ENCODE measurements at regions of chr16 and their contacts with region 1.

Region 1: DNA sequence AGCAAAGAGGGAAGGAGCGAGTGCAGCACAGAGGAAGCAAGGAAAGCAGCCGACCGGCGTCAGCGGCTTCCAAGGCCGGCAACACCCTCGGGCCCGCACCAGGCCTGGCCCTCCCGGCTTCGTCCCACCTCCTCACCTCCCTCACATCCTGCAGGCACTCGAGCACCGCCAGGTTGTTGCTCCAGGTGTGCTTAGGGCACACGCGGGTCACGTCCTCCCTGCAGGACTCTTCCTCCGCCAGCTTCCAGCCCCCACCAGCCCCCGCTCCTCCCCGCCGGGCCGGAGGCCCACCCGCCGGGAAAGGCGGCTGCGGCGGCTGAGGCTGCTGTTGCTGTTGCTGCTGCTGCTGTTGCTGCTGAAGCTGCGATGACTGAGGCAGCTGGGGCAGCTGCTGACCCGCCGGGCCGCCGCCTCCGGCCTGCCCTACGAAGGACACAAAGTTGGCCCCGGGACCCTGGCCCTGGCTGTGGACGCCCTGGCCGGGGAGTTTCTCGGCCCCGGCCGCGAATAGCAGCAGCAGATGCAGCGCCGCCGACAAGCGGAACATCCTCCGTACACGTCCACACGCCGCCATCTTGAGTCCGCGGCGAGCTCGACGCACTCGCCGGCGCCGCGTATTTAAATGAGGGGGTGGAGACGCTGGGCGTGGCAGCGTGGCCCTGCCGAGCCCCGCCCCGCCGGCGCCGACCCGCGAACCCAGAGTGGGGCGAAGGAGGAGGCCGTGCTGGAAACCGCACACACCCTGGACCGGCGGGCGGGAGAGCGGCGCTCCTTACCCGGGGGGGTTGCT is at the start of gene GLG1:
- DNase-seq: peak; percentile 95
- ATAC-seq: peak; percentile 90
- H3K4me3 Mint-ChIP-seq: peak within 1 kb of the TSS; percentile 89
- H3K27ac Mint-ChIP-seq: peak within 1 kb of the TSS; percentile 86
- H3K4me1 Mint-ChIP-seq: peaks cover 47% of the 10 kb centered on the region
- H3K27me3 Mint-ChIP-seq: no peaks in the 10 kb centered on the region
- total RNA-seq, gene GLG1: 118 to 120 TPM

Region 2: GRCh38 chr16:74556375-74556922 is 50.3 kb before region 1 on chr16:
- POLR2A ChIA-PET with region 1: no interaction called
- DNase-seq: no peak
- ATAC-seq: no peak
- H3K4me3 Mint-ChIP-seq: no peak overlapping the region
- H3K27ac Mint-ChIP-seq: no peak overlapping the region
- H3K4me1 Mint-ChIP-seq: peaks cover 15% of the 10 kb centered on the region
- H3K27me3 Mint-ChIP-seq: no peaks in the 10 kb centered on the region

Region 3: DNA sequence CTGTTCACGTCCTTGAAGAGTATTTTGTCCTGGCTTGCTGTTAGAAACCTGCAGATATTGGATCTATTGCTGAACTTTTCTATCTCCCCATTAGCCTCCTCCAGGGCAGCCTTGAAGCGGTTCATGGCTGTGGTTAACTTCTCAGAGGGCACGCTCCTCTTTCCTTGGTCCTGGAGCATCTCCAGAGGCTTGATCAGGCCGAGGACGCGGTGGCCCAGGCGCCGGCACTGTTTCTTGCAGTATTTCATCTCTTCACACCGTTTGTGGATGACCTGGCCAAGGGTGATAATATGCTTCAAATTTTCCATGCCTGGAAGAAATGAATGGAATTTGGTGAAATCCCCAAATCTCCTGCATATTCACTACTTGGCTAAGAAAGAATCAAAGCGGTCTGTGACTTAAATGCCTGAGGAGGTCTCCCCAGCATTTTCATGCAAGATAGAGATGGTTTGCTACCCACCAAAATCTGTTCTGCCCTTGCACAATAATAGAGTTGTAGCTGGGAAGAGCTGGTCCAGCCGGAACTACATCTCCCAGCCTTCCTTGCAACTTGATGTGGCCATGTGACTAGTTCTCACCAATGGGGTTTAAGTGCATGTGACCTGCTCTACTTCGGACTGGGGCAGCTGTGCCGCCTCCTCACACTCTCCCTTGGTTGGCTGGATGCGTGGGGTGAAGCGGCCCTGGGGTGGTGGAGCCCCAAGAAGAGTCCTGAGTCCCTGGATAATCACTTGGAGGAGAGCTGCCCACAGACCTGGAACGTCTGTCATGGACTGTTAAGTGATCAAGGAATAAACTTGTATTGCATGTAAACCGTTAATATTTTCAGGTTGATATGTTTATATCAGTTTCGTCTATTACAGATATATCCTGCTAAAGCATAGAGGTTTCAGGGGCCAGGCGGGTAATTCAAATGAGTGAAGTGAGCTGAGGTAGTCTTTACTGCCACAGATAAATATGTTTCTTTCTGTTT is 89.0 kb after region 1 on chr16:
- POLR2A ChIA-PET with region 1: interaction called, 13 read pairs
- DNase-seq: peak; percentile 54
- ATAC-seq: peak; percentile 73
- H3K4me3 Mint-ChIP-seq: peak overlapping the region; percentile 86
- H3K27ac Mint-ChIP-seq: peak overlapping the region; percentile 87
- H3K4me1 Mint-ChIP-seq: peaks cover 28% of the 10 kb centered on the region
- H3K27me3 Mint-ChIP-seq: no peaks in the 10 kb centered on the region

Measured in activated naive CD8-positive, alpha-beta T cell treated with anti-CD3 and anti-CD28 coated beads, Interleukin-2, amount 10 ng/mL, durations not matched to agents 7 days and 5 days (primary cell).